PC-3 (cell line): ENCODE measurements at regions of chr9 and their contacts with region 1.

Region 1: GRCh38 chr9:37271679-37272078 is 150.8 kb upstream of the GRHPR start:
- DNase-seq: no peak
- ATAC-seq: no peak
- H3K4me3 ChIP-seq: no peak overlapping the region
- H3K27ac ChIP-seq: no peak overlapping the region
- H3K4me1 ChIP-seq: no peaks in the 10 kb centered on the region
- H3K27me3 ChIP-seq: no peaks in the 10 kb centered on the region
- CTCF ChIP-seq: no peak

Region 2: DNA sequence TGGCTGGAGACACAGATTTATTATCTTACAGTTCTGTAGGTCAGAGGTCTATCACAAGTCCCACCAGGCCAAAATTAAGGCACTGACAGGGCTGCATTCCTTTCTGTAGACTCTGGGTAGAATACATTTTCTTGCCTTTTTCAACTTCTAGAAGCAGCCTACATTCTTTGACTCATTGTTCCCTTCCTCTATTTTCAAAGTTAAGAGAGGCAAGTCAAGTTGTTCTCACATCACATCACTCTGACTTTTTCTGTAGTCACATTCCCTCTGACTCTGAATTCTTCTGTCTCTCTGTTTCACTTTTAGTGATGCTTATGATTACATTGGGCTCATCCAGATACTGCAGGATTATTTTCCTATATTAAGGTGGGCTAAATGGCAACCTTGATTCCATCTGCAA is 580.0 kb before region 1 on chr9:
- CTCF ChIA-PET with region 1: no interaction called
- POLR2A ChIA-PET with region 1: no interaction called
- intact Hi-C with region 1: no loop called
- DNase-seq: no peak
- ATAC-seq: no peak
- H3K4me3 ChIP-seq: no peak overlapping the region
- H3K27ac ChIP-seq: no peak overlapping the region
- H3K4me1 ChIP-seq: no peaks in the 10 kb centered on the region
- H3K27me3 ChIP-seq: no peaks in the 10 kb centered on the region
- CTCF ChIP-seq: no peak

Region 3: GRCh38 chr9:37335238-37335637 is 63.6 kb after region 1 on chr9:
- CTCF ChIA-PET with region 1: no interaction called
- POLR2A ChIA-PET with region 1: interaction called, 11 read pairs
- intact Hi-C with region 1: no loop called
- DNase-seq: no peak
- ATAC-seq: no peak
- H3K4me3 ChIP-seq: no peak overlapping the region
- H3K27ac ChIP-seq: no peak overlapping the region
- H3K4me1 ChIP-seq: no peaks in the 10 kb centered on the region
- H3K27me3 ChIP-seq: no peaks in the 10 kb centered on the region
- CTCF ChIP-seq: no peak